ENCODE measurements at regions of chr5 and their contacts with region 1.

Region 1: GRCh38 chr5:16465544-16466466 is at the start of gene ZNF622:
- DNase-seq: peak; percentile 88
- ATAC-seq: peak; percentile 73
- H3K4me3 ChIP-seq: peak within 1 kb of the TSS; percentile 88
- H3K27ac ChIP-seq: peak within 1 kb of the TSS; percentile 87
- H3K4me1 ChIP-seq: peaks cover 19% of the 10 kb centered on the region
- H3K27me3 ChIP-seq: no peaks in the 10 kb centered on the region
- CTCF ChIP-seq: no peak
- POLR2A ChIP-seq: peak; percentile 89
- RAD21 ChIP-seq: no peak
- total RNA-seq, gene ZNF622: 49.3 and 66.4 TPM in 2 replicates

Region 2: GRCh38 chr5:16260000-16260399 is 205.8 kb before region 1 on chr5:
- CTCF ChIA-PET with region 1: no interaction called
- POLR2A ChIA-PET with region 1: no interaction called
- dilution Hi-C with region 1: no loop called
- in situ Hi-C with region 1: no loop called
- intact Hi-C with region 1: no loop called
- DNase-seq: no peak
- ATAC-seq: no peak
- H3K4me3 ChIP-seq: no peak overlapping the region
- H3K27ac ChIP-seq: no peak overlapping the region
- H3K4me1 ChIP-seq: no peaks in the 10 kb centered on the region
- H3K27me3 ChIP-seq: no peaks in the 10 kb centered on the region
- CTCF ChIP-seq: no peak
- POLR2A ChIP-seq: no peak
- RAD21 ChIP-seq: no peak

Region 3: GRCh38 chr5:16508730-16509531 is 43.1 kb after region 1 on chr5:
- CTCF ChIA-PET with region 1: no interaction called
- POLR2A ChIA-PET with region 1: interaction called, 20 read pairs
- dilution Hi-C with region 1: no loop called
- in situ Hi-C with region 1: no loop called
- intact Hi-C with region 1: no loop called
- DNase-seq: no peak
- ATAC-seq: no peak
- H3K4me3 ChIP-seq: no peak overlapping the region
- H3K27ac ChIP-seq: no peak overlapping the region
- H3K4me1 ChIP-seq: no peaks in the 10 kb centered on the region
- H3K27me3 ChIP-seq: peaks cover 31% of the 10 kb centered on the region
- CTCF ChIP-seq: no peak
- POLR2A ChIP-seq: no peak
- RAD21 ChIP-seq: no peak

Region 4: GRCh38 chr5:16558984-16559629 is 93.3 kb after region 1 on chr5:
- CTCF ChIA-PET with region 1: no interaction called
- POLR2A ChIA-PET with region 1: no interaction called
- dilution Hi-C with region 1: no loop called
- in situ Hi-C with region 1: no loop called
- intact Hi-C with region 1: no loop called
- DNase-seq: no peak
- ATAC-seq: no peak
- H3K4me3 ChIP-seq: no peak overlapping the region
- H3K27ac ChIP-seq: no peak overlapping the region
- H3K4me1 ChIP-seq: no peaks in the 10 kb centered on the region
- H3K27me3 ChIP-seq: peaks cover 8% of the 10 kb centered on the region
- CTCF ChIP-seq: no peak
- POLR2A ChIP-seq: no peak
- RAD21 ChIP-seq: no peak

Region 5: DNA sequence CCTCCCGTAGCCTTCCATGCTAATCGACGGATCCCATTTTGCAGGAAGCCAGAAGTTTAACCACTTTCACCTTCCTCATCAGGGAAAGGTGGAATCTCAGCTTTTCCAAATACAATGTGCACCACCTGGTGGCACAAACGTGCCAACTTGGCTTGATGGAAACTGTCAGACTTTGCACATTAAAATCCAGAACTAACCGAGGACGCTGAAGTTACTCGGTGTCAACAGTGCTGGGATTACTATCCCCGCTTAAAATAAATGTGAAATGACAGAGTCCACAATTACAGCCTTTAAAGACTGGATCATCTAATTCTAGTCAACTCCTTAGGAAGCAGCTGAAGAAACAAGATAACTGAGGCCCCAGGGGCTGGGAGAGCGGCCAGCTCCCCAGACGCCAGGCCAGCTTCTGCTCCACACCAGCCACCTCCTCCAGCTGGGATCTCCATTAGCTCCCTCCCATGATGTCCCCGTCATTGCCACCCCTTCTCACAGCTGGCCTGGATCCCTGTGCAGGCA is 201.1 kb after region 1 on chr5:
- CTCF ChIA-PET with region 1: no interaction called
- POLR2A ChIA-PET with region 1: no interaction called
- dilution Hi-C with region 1: no loop called
- in situ Hi-C with region 1: no loop called
- intact Hi-C with region 1: loop called (anchors 5 kb)
- DNase-seq: peak; percentile 15
- ATAC-seq: no peak
- H3K4me3 ChIP-seq: no peak overlapping the region
- H3K27ac ChIP-seq: no peak overlapping the region
- H3K4me1 ChIP-seq: peaks cover 16% of the 10 kb centered on the region
- H3K27me3 ChIP-seq: no peaks in the 10 kb centered on the region
- CTCF ChIP-seq: no peak
- POLR2A ChIP-seq: no peak
- RAD21 ChIP-seq: no peak

Region 6: GRCh38 chr5:16819522-16820167 is 353.8 kb after region 1 on chr5:
- CTCF ChIA-PET with region 1: no interaction called
- POLR2A ChIA-PET with region 1: no interaction called
- dilution Hi-C with region 1: no loop called
- in situ Hi-C with region 1: no loop called
- intact Hi-C with region 1: no loop called
- DNase-seq: peak; percentile 86
- ATAC-seq: peak; percentile 55; the same call in 1 of the 2 replicates
- H3K4me3 ChIP-seq: no peak overlapping the region
- H3K27ac ChIP-seq: peak overlapping the region; percentile 26; the same call in 1 of the 2 replicates
- H3K4me1 ChIP-seq: peaks cover 7% of the 10 kb centered on the region
- H3K27me3 ChIP-seq: no peaks in the 10 kb centered on the region
- CTCF ChIP-seq: no peak
- POLR2A ChIP-seq: no peak
- RAD21 ChIP-seq: no peak